Mammary epithelial cell (primary cell): ENCODE measurements at regions of chr7 and their contacts with region 1.

Region 1: GRCh38 chr7:2283074-2283473 is 31.2 kb downstream of the SNX8 start:
- DNase-seq: no peak
- H3K4me3 ChIP-seq: no peak overlapping the region
- H3K27ac ChIP-seq: no peak overlapping the region
- H3K4me1 ChIP-seq: no peaks in the 10 kb centered on the region
- H3K27me3 ChIP-seq: no peaks in the 10 kb centered on the region
- CTCF ChIP-seq: no peak

Region 2: GRCh38 chr7:2321020-2321419 is 37.9 kb after region 1 on chr7:
- CTCF ChIA-PET with region 1: interaction called, 25 read pairs
- dilution Hi-C with region 1: no loop called
- in situ Hi-C with region 1: no loop called
- intact Hi-C with region 1: no loop called
- DNase-seq: no peak
- H3K4me3 ChIP-seq: no peak overlapping the region
- H3K27ac ChIP-seq: no peak overlapping the region
- H3K4me1 ChIP-seq: no peaks in the 10 kb centered on the region
- H3K27me3 ChIP-seq: no peaks in the 10 kb centered on the region
- CTCF ChIP-seq: peak in 1 of 2 donors; percentile 12

Region 3: GRCh38 chr7:2331707-2332106 is 48.6 kb after region 1 on chr7:
- CTCF ChIA-PET with region 1: no interaction called
- dilution Hi-C with region 1: no loop called
- in situ Hi-C with region 1: no loop called
- intact Hi-C with region 1: no loop called
- DNase-seq: no peak
- H3K4me3 ChIP-seq: no peak overlapping the region
- H3K27ac ChIP-seq: no peak overlapping the region
- H3K4me1 ChIP-seq: no peaks in the 10 kb centered on the region
- H3K27me3 ChIP-seq: no peaks in the 10 kb centered on the region
- CTCF ChIP-seq: no peak

Region 4: DNA sequence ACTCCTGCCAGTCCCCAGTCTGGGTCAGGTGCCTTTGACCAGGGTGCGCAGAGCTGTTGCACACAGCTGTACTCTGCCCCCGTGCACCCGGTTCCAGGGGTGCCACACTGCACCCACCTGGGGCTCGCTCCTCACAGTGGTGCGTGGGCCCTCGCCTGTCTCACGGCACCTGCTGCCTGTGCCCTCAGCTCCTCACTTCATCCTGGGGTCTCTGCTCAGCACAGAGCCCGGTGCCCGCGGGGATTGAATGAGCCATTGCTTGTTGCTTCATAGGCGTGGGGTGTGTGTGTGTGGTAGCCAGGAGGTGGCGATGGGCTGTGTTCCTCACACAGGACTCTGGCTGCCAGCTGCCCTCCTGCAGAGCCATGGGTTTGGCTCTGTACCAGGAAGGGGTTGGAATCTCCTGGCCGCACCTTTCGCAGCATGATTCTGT is 90.1 kb after region 1 on chr7:
- CTCF ChIA-PET with region 1: no interaction called
- dilution Hi-C with region 1: no loop called
- in situ Hi-C with region 1: no loop called
- intact Hi-C with region 1: no loop called
- DNase-seq: peak; percentile 24
- H3K4me3 ChIP-seq: no peak overlapping the region
- H3K27ac ChIP-seq: no peak overlapping the region
- H3K4me1 ChIP-seq: peaks cover 7% of the 10 kb centered on the region
- H3K27me3 ChIP-seq: no peaks in the 10 kb centered on the region
- CTCF ChIP-seq: peak in 1 of 2 donors; percentile 13